ENCODE measurements at regions of chr4 and their contacts with region 1.

Region 1: DNA sequence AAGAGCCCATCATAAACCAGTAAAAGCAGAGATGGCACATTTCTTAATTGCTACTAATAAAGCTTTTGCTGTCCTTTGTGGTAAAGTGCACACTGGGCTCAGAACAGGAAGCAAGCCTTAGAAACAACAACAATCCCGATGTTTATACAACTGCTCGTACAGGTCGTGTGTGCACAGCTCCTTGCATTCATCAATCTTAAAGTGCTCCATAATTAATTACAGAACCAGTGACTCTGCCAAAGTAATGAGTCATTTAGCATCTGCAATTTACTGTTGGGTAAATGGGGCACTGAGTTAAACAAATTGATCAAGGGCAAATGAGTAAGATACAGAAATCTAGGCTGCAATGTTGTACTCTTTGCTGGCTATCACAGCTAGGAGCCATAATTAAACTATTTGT is 61.3 kb upstream of the TXK start:
- DNase-seq: no peak
- H3K4me3 ChIP-seq: no peak overlapping the region
- H3K27ac ChIP-seq: no peak overlapping the region
- H3K4me1 ChIP-seq: no peaks in the 10 kb centered on the region
- H3K27me3 ChIP-seq: no peaks in the 10 kb centered on the region
- CTCF ChIP-seq: no peak

Region 2: DNA sequence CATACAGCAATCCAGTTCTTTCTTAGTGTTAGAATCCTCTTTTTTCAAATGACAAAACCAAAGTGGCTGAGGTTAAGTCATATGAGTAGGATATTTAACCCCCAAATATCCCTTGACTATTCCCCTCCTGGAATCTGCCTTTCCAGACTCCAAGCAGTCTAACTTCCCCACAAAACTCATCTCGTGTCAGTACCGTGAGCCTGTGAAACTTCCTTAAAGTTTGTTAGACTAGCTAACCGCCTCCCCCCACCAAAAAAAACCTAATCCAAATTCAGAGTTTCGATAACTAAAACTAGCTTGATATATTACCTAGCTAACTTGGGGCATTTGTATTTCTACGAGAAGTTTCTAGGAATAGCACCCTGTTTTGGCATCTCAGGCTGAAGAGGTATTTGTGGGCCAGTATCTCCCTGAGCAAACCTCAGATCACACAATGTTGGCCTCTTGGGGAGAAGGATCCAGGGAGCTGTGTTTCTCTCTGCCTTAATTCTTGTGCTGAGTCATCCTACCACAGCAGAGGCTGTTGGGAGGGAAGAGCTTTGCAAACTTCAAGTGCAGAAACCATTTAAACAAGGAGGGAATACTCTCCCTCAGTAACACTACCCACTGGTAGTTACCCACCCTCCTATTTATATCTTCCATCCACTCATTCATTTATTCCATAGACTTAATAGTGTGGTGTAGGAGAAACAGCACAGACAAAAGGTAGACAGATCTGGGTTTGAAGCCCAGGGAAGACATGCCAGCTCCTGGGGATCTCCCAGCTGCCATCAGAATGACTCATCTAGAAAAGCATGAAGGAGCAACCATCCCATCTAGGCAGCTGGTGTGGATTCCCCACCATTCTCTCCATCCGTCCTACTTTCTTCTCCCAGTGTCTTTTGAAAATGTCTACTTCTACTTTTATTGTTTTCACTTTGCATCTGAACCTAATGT is 22.1 kb before region 1 on chr4:
- CTCF ChIA-PET with region 1: no interaction called
- POLR2A ChIA-PET with region 1: interaction called, 11 read pairs
- intact Hi-C with region 1: no loop called
- DNase-seq: peak in 1 of 2 experiments; percentile 6
- H3K4me3 ChIP-seq: no peak overlapping the region
- H3K27ac ChIP-seq: no peak overlapping the region
- H3K4me1 ChIP-seq: 0 out of 2 replicates have a peak, but pooled peaks cover 3% of the 10 kb centered on the region
- H3K27me3 ChIP-seq: no peaks in the 10 kb centered on the region
- CTCF ChIP-seq: no peak